ENCODE measurements at regions of chr1 and their contacts with region 1.

Region 1: DNA sequence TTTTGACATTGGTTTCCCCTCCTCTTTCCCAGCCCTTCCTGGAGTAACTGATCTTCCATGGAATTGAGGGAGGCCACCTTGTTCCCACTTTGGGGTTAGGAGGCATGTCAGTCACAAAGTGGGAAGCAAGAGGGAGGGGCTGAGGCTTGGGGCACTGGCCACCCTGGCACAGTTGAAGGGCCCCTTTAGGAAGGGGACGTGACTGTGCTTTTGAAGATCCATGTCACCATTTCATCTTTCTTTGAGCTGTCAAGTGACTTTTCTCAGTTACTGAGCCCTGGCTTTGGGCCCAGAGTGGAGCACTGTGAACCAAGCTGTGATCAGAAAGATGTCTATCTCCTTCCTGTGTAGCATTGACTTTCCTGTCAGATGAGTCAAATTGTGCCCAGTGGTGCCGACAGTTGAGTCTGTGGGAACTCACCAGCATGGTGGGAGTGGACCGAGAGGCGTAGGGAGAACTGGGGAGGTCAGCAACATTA is 38.5 kb upstream of the TDRD10 start:
- DNase-seq: peak; percentile 74 to 88 (median 77)
- H3K4me3 ChIP-seq: no peak overlapping the region
- H3K4me3 Mint-ChIP-seq: peak overlapping the region; percentile 76 to 93 (median 86)
- H3K27ac ChIP-seq: peak overlapping the region; percentile 66
- H3K27ac Mint-ChIP-seq: peak overlapping the region; percentile 94 to 100 (median 98)
- H3K4me1 ChIP-seq: peaks cover 98% of the 10 kb centered on the region
- H3K4me1 Mint-ChIP-seq: peaks cover 57 to 92% (median 79%) of the 10 kb centered on the region in 4 donors
- H3K27me3 ChIP-seq: no peaks in the 10 kb centered on the region
- H3K27me3 Mint-ChIP-seq: no peaks in the 10 kb centered on the region

Region 2: DNA sequence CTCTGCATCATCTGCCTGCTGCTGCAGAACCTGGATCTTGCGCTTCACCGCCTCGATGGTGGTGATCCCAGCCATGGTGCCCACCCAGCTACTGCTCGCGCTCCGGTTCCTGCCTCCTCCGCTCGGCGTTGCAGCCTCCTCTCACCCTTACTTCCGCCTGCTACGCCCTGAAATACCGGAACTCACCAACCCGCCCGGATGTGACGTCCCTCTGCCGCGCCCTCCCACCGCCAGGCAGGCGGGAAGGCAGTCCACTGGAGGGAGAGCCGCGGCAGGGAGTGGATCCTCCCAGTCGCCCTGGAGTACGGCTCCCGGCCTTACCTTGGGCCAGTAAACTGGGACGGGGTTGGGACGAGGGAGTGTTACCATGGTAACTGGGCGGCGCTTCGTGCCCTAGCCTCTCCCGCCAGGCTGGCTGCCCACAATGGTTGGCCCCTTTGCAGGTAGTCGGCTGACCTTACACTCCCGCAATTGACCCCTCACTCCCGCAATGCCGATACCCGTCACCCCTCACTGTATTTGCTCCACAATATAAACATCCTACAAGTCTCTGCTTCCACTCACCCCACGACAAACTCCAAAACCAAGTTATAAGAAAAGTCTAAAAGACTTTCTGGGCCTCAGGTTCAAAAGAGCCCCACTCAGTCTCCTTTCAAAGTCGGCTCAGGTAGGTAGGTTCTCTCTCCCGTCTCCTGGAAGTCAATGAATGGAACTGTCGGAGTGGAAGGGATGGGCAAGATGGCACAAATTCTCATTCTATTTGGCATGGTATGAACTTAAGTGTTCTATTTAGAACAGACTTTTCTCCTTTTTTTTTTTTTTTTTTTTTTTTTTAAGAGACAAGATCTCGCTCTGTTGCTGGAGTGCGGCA is 280.3 kb before region 1 on chr1:
- CTCF ChIA-PET with region 1: no interaction called
- POLR2A ChIA-PET with region 1: interaction called, 4 read pairs
- intact Hi-C with region 1: loop called (anchors 10 kb)
- DNase-seq: peak; percentile 91 to 96 (median 92)
- H3K4me3 ChIP-seq: peak overlapping the region; percentile 74 to 90
- H3K4me3 Mint-ChIP-seq: peak overlapping the region; percentile 99 to 100 (median 100)
- H3K27ac ChIP-seq: peak overlapping the region; percentile 93
- H3K27ac Mint-ChIP-seq: peak overlapping the region; percentile 98 to 100 (median 100)
- H3K4me1 ChIP-seq: peaks cover 42% of the 10 kb centered on the region
- H3K4me1 Mint-ChIP-seq: peaks cover 34 to 62% (median 46%) of the 10 kb centered on the region in 4 donors
- H3K27me3 ChIP-seq: no peaks in the 10 kb centered on the region
- H3K27me3 Mint-ChIP-seq: no peaks in the 10 kb centered on the region

Region 3: DNA sequence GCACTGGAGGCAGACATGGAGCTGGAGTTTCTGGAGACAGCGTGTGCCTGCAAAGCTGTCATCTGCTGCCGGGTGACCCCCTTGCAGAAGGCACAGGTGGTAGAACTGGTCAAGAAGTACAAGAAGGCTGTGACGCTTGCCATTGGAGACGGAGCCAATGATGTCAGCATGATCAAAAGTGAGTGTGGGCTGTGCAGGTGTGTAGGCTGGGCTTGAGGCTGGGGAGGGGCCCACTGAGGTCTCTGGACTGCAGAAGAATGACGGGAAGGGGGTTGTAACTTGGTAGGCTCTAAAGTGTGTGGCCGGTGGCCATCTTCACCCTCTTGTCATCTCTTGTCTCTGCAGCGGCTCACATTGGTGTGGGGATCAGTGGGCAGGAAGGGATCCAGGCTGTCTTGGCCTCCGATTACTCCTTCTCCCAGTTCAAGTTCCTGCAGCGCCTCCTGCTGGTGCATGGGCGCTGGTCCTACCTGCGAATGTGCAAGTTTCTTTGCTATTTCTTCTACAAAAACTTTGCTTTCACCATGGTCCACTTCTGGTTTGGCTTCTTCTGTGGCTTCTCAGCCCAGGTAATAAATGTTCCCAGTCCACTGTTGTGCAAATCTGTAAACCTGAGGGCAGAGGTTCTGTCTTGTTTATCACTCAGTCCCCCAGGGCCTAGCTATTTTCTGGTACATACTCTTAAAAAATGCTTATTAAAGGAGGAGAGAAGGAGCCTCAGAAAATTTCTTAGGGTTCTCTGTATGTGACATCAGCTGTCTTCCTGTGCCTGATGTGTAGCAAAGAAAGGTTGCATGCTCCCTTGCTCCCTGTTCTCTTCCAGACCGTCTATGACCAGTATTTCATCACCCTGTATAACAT is 118.3 kb before region 1 on chr1:
- CTCF ChIA-PET with region 1: interaction called, 9 read pairs
- POLR2A ChIA-PET with region 1: interaction called, 12 read pairs
- intact Hi-C with region 1: no loop called
- DNase-seq: peak; percentile 75 to 84 (median 81)
- H3K4me3 ChIP-seq: peak overlapping the region; percentile 62
- H3K4me3 Mint-ChIP-seq: peak overlapping the region; percentile 87 to 99 (median 94)
- H3K27ac ChIP-seq: peak overlapping the region; percentile 66
- H3K27ac Mint-ChIP-seq: peak overlapping the region; percentile 86 to 98 (median 92)
- H3K4me1 ChIP-seq: peaks cover 96% of the 10 kb centered on the region
- H3K4me1 Mint-ChIP-seq: peaks cover 54 to 98% (median 76%) of the 10 kb centered on the region in 4 donors
- H3K27me3 ChIP-seq: no peaks in the 10 kb centered on the region
- H3K27me3 Mint-ChIP-seq: no peaks in the 10 kb centered on the region

Region 4: DNA sequence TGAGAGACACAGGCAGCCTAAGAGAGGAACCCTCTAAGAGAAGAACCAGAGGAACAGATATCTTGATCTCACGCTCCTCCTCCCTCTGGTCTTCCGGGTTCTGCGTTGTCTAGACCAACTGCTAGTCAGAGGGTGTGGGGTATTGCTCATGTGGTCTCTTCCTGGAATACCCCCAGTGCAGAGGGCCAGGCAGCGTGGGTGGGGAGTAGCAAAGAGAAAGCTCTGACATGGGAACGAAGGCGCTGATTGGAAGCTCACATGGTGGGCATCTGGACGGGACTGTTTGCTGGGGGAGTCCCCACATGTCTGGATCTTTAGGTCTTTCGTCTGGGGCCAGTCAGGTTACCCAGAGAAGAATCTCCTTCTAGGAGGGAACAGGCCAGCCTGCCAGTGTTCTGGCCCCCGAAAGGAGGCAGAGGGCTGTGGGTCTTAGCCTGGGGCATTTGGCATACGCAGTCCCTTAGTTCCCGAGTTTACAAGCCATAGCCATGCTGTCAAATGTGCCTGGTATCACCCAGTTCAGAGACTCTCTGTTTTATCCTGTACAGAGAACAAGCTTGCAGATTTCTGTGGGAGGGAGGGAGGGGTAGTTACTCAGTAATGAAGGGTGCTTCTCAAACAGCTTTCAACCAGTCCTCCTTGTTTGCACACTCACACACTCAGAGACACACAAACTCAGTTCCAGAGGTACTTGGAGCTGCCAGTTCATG is 76.8 kb before region 1 on chr1:
- CTCF ChIA-PET with region 1: no interaction called
- POLR2A ChIA-PET with region 1: interaction called, 18 read pairs
- intact Hi-C with region 1: no loop called
- DNase-seq: peak in 4 of 5 donors; percentile 43 to 86 (median 58)
- H3K4me3 ChIP-seq: peak overlapping the region in 1 of 2 donors; percentile 34
- H3K4me3 Mint-ChIP-seq: peak overlapping the region; percentile 79 to 88 (median 85)
- H3K27ac ChIP-seq: peak overlapping the region; percentile 67
- H3K27ac Mint-ChIP-seq: peak overlapping the region; percentile 88 to 99 (median 97)
- H3K4me1 ChIP-seq: peaks cover 36% of the 10 kb centered on the region
- H3K4me1 Mint-ChIP-seq: peaks cover 22 to 34% (median 28%) of the 10 kb centered on the region in 4 donors
- H3K27me3 ChIP-seq: no peaks in the 10 kb centered on the region
- H3K27me3 Mint-ChIP-seq: no peaks in the 10 kb centered on the region

Region 5: DNA sequence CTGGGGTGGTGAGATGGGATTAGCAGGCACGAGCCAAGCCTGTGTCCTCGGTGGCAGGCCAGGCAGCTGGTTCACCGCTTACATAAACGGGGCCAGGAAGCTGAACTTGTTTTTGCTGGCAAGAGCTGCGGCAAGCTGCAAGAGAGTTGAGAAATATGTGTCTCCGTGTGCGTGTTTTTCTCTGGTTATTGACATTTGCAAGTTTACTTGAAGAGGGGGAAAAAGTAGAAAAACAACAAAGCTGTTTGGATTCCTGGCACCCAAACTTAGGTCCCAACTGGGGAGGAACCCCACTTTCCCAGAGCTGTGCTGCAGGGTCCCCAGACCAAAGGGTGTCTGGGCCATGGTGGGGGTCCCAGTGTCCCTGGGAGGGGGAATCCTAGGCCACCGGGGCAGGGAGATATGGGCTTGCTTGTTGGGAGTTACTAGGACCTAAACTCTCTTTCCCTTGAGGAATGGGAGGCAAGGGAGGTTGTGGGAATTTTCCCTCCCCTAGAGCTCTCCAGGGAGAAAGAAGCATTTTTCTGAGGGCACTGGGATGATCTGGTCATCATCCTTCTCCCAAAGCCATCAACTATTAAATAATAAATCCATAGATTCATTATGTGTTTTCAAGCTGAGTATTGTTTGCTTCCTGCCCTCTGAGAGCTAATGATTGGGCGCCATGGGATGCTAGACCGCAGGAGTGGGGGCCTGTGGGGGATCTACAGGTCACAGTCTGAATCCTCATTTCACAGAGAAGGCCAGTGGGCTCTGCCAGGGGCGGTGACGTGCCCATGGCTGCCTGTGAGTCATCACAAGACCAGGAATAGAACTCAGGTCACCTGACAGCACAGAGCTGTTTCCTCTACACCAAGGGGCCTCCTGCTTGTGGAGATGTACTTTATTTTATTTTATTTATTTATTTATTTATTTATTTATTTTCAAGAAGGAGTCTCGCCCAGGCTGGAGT is 43.7 kb before region 1 on chr1:
- CTCF ChIA-PET with region 1: interaction called, 5 read pairs
- POLR2A ChIA-PET with region 1: interaction called, 25 read pairs
- intact Hi-C with region 1: no loop called
- DNase-seq: peak; percentile 40 to 81 (median 48)
- H3K4me3 ChIP-seq: peak overlapping the region; percentile 50 to 54
- H3K4me3 Mint-ChIP-seq: peak overlapping the region; percentile 64 to 84 (median 81)
- H3K27ac ChIP-seq: peak overlapping the region; percentile 58
- H3K27ac Mint-ChIP-seq: peak overlapping the region; percentile 85 to 97 (median 94)
- H3K4me1 ChIP-seq: peaks cover 94% of the 10 kb centered on the region
- H3K4me1 Mint-ChIP-seq: peaks cover 57 to 100% (median 82%) of the 10 kb centered on the region in 4 donors
- H3K27me3 ChIP-seq: no peaks in the 10 kb centered on the region
- H3K27me3 Mint-ChIP-seq: no peaks in the 10 kb centered on the region

Region 6: DNA sequence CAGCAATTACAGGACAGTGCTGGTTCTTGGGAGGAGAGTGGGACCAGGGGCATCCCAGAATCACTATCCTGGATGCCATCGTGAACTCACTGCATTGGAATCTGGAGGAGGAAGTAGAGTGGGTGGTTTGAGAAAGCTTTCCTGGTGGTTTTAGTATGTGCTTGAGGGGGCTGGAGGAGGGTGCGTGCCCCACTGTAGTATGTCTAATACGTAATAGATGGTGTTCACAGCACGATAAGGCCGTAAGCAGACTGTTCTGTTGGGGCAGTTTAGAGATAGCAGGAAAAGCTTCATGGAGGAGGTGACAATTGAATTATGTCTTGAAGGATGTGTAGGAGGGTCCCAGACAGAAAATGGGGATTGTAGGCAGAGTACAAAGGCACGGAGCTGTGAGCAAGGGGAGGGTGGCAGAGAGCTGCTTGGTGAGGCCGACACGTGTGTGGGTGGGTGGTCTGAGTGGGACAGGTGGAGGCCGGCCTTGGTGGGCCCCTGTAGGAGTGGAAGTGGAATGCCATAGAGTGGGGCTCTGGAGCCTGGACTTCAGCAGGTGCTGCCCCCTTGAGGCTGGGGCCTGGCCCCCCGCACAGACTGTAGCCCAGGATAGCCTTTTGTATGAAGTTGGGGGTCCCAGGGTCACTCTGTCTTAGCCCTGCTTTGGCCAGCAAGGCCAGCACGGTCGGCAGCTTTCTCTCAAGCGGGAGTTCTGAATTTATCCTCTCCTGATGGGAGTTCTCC is 21.4 kb before region 1 on chr1:
- CTCF ChIA-PET with region 1: interaction called, 8 read pairs
- POLR2A ChIA-PET with region 1: interaction called, 11 read pairs
- intact Hi-C with region 1: loop called (anchors 2 kb)
- DNase-seq: no peak
- H3K4me3 ChIP-seq: no peak overlapping the region
- H3K4me3 Mint-ChIP-seq: peak overlapping the region; percentile 32 to 87 (median 76)
- H3K27ac ChIP-seq: peak overlapping the region; percentile 47
- H3K27ac Mint-ChIP-seq: peak overlapping the region; percentile 81 to 99 (median 94)
- H3K4me1 ChIP-seq: peaks cover 69% of the 10 kb centered on the region
- H3K4me1 Mint-ChIP-seq: peaks cover 47 to 75% (median 64%) of the 10 kb centered on the region in 4 donors
- H3K27me3 ChIP-seq: no peaks in the 10 kb centered on the region
- H3K27me3 Mint-ChIP-seq: no peaks in the 10 kb centered on the region